ENCODE measurements at regions of chr2 and their contacts with region 1.

Region 1: DNA sequence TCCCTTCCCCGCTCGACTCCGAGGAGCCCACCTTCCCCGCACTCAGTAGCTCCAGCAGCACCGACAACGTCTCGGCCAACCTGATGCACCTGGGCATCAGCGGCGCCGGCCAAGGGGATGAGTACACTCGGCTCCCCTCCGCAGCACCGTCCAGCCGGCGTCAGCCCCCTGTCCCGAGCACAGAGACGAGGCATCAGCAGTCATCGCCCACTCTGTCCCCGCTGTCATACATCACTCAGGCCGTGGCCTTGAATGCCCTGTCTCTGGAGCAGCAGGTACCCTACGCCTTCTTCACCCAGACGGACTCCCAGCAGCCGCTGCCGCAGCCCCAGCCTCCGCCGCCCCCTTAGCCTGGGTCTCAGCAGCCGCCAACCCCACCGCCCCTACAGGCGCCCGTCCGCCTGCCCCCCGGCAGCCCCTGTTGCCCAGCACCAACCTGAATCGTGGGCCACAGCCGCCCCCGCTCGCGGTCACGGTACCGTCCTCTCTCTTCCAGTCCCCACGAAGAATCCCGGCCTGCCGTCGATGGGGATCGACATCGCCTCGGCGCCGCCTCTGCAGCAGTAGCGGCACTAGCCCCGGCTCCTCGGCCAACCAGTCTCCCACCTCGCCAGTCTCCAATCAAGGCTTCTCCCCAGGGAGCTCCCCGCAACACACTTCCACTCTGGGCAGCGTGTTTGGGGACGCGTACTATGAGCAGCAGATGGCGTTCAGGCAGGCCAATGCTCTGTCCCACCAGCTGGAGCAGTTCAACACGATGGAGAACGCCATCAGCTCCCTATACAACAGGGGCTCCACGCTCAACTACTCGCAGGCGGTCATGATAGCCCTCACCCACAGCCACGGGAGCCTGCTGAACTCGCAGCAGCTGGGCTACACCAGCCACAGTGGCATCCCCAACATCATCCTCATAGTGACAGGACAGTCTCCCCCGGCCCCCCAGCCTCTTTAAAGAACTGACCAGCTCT is 1195.9 kb upstream of the CHAC2 start:
- DNase-seq: no peak
- H3K4me3 ChIP-seq: no peak overlapping the region
- H3K4me3 Mint-ChIP-seq: no peak overlapping the region
- H3K27ac ChIP-seq: no peak overlapping the region
- H3K27ac Mint-ChIP-seq: no peak overlapping the region
- H3K4me1 ChIP-seq: no peaks in the 10 kb centered on the region
- H3K4me1 Mint-ChIP-seq: no peaks in the 10 kb centered on the region
- H3K27me3 ChIP-seq: no peaks in the 10 kb centered on the region
- H3K27me3 Mint-ChIP-seq: no peaks in the 10 kb centered on the region

Region 2: DNA sequence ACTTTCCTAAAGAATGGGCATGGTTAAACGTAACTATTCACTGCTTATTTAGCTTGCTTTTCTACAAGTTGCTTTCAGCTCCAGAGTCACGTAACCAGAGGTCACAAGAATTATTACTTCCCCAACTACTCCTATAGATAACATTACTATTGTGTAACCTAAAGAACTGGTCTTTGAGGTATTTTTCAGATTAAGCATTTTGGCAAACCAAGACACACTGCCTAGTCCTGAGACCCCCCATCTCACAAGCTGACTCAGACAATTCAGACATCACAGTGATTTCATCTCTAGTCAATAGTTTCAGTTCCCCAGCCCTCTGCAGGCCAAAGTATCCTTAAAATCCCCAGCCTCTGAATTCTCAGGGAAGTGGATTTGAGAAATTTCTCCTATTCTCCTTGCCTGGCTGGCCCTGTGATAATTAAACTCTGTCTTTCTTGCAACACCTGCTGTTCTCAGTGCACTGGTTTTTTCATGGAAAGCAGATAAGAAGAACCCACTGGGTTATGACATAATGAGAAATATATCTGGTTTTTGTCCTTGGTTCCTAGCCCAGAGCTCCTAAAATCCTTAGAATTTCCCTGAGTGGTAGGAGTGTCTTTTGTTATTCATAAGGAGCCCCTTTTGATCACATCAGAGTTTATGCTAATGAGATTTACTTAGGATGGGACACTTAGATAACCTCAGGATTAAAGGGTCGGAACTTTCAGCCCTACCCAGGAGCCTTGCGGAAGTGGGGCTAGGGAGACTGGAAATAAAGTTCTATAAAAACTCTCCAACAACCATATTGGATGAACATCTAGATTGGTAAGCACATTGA is 114.9 kb before region 1 on chr2:
- CTCF ChIA-PET with region 1: no interaction called
- POLR2A ChIA-PET with region 1: no interaction called
- intact Hi-C with region 1: no loop called
- DNase-seq: no peak
- H3K4me3 ChIP-seq: no peak overlapping the region
- H3K4me3 Mint-ChIP-seq: no peak overlapping the region
- H3K27ac ChIP-seq: no peak overlapping the region
- H3K27ac Mint-ChIP-seq: no peak overlapping the region
- H3K4me1 ChIP-seq: no peaks in the 10 kb centered on the region
- H3K4me1 Mint-ChIP-seq: no peaks in the 10 kb centered on the region
- H3K27me3 ChIP-seq: no peaks in the 10 kb centered on the region
- H3K27me3 Mint-ChIP-seq: no peaks in the 10 kb centered on the region

Region 3: GRCh38 chr2:52518678-52519077 is 53.0 kb before region 1 on chr2:
- CTCF ChIA-PET with region 1: no interaction called
- POLR2A ChIA-PET with region 1: no interaction called
- intact Hi-C with region 1: loop called (anchors 2 kb)
- DNase-seq: no peak
- H3K4me3 ChIP-seq: no peak overlapping the region
- H3K4me3 Mint-ChIP-seq: no peak overlapping the region
- H3K27ac ChIP-seq: no peak overlapping the region
- H3K27ac Mint-ChIP-seq: no peak overlapping the region
- H3K4me1 ChIP-seq: no peaks in the 10 kb centered on the region
- H3K4me1 Mint-ChIP-seq: no peaks in the 10 kb centered on the region
- H3K27me3 ChIP-seq: no peaks in the 10 kb centered on the region
- H3K27me3 Mint-ChIP-seq: no peaks in the 10 kb centered on the region

Measured in CD4-positive, alpha-beta memory T cell (primary cell).